H1 (cell line): ENCODE measurements at regions of chr2 and their contacts with region 1.

Region 1: DNA sequence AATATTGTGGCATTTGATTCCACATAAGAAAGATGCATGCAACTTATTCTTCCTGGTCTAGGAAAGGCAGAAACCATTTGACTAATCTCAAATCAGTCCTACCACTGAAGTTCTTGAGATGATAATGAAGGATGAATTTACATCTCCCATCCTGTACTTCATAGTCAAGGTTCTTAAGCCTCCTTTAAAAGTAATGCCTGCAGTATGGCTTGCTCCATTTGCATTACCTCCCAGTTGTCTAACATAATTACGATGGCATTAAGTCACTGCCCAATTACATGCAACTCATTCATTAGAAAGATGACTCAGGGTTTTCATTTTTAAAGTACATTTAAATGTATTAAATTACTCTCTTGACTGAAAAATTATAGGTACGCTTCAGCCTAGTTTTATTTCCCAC is 32.2 kb downstream of the THADA start:
- DNase-seq: no peak
- H3K4me3 ChIP-seq: no peak overlapping the region
- H3K27ac ChIP-seq: no peak overlapping the region
- H3K4me1 ChIP-seq: peaks cover 0 to 2% (median 0%) of the 10 kb centered on the region in 4 experiments; a peak in 2 of 7 replicates
- H3K27me3 ChIP-seq: no peaks in the 10 kb centered on the region
- CTCF ChIP-seq: no peak
- EP300 ChIP-seq: no peak
- POLR2A ChIP-seq: no peak
- RAD21 ChIP-seq: no peak

Region 2: GRCh38 chr2:43438858-43439655 is 124.6 kb before region 1 on chr2:
- CTCF ChIA-PET with region 1: no interaction called
- POLR2A ChIA-PET with region 1: no interaction called
- DNase-seq: no peak
- H3K4me3 ChIP-seq: no peak overlapping the region
- H3K27ac ChIP-seq: no peak overlapping the region
- H3K4me1 ChIP-seq: peaks cover 0 to 3% (median 0%) of the 10 kb centered on the region in 4 experiments; a peak in 2 of 7 replicates
- H3K27me3 ChIP-seq: no peaks in the 10 kb centered on the region
- CTCF ChIP-seq: no peak
- EP300 ChIP-seq: no peak
- POLR2A ChIP-seq: no peak
- RAD21 ChIP-seq: no peak

Region 3: GRCh38 chr2:43576981-43577892 is 13.6 kb after region 1 on chr2:
- CTCF ChIA-PET with region 1: interaction called, 24 read pairs
- POLR2A ChIA-PET with region 1: no interaction called
- DNase-seq: no peak
- H3K4me3 ChIP-seq: no peak overlapping the region
- H3K27ac ChIP-seq: 0 out of 2 replicates have a peak overlapping the region, but pooled peaks have one; percentile 17
- H3K4me1 ChIP-seq: no peaks in the 10 kb centered on the region
- H3K27me3 ChIP-seq: no peaks in the 10 kb centered on the region
- CTCF ChIP-seq: peak in 2 of 3 experiments; percentile 45 to 59; a peak in 3 of 4 replicates
- EP300 ChIP-seq: no peak
- POLR2A ChIP-seq: no peak
- RAD21 ChIP-seq: peak; percentile 25 to 31; a peak in 2 of 4 replicates

Region 4: GRCh38 chr2:43977677-43978375 is 414.1 kb after region 1 on chr2:
- CTCF ChIA-PET with region 1: no interaction called
- POLR2A ChIA-PET with region 1: no interaction called
- DNase-seq: no peak
- H3K4me3 ChIP-seq: no peak overlapping the region
- H3K27ac ChIP-seq: no peak overlapping the region
- H3K4me1 ChIP-seq: no peaks in the 10 kb centered on the region
- H3K27me3 ChIP-seq: no peaks in the 10 kb centered on the region
- CTCF ChIP-seq: no peak
- EP300 ChIP-seq: no peak
- POLR2A ChIP-seq: no peak
- RAD21 ChIP-seq: no peak